ENCODE measurements at regions of chr17 and their contacts with region 1.

Region 1: DNA sequence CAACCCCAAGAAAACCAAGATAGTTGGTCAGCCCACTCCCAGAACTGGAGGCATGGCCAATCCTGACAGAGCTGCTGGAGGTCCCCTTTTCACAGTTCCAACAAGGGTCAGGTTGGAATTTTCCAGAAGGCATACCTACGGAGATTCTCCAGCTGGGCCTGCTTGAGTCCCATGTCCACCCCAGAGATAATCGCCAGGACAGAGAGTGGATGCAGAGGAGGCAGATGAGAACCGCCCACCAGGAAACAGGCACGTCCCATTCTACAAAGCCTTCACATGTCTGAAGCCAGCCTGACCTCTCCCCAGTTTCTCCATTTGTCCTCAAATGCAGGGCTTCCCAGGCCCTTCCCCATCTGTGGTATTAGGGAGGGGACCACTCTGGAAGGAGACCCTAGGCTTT is 47.4 kb upstream of the SMURF2 start:
- DNase-seq: no peak
- H3K4me3 ChIP-seq: no peak overlapping the region
- CTCF ChIP-seq: no peak

Region 2: DNA sequence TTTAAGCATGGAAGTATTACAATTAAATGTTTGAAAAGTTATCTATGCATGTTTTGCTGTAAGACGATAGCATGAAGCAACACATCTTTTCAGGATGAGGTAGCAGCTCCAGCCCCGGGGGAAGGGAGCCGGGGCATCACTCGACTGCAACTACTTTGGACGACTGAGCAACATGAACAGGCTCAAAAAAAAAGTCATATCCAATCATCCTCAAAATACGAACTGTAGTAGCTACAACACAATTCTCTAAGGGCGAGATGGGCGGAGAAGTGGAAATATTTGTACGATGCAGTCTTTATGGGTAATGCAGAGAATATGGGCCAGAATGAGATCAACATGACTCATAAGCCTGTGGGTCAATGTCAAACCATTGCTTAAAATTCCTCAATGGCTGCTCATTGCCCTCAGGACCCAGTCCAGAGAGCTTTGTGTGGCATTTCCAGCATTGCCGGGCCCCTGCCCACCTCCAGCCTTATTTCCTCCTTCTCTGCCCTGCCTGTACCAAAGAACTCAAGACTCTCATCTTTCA is 29.7 kb before region 1 on chr17:
- CTCF ChIA-PET with region 1: interaction called, 3 read pairs
- POLR2A ChIA-PET with region 1: interaction called, 12 read pairs
- DNase-seq: peak; percentile 99
- H3K4me3 ChIP-seq: peak overlapping the region; percentile 35
- CTCF ChIP-seq: no peak